T-cell (primary cell): ENCODE measurements at regions of chrX and their contacts with region 1.

Region 1: GRCh38 chrX:154443479-154443910 is 446 bp upstream of the FAM50A start:
- DNase-seq: peak in 1 of 35 experiments; percentile 16
- ATAC-seq: peak in 3 of 4 experiments; percentile 5 to 28 (median 11)
- H3K4me3 ChIP-seq: peak overlapping the region in 1 of 2 donors; percentile 33
- H3K4me3 Mint-ChIP-seq: peak overlapping the region; percentile 60 to 72 (median 68)
- H3K27ac ChIP-seq: peak overlapping the region; percentile 70
- H3K27ac Mint-ChIP-seq: peak overlapping the region; percentile 41 to 77
- H3K4me1 ChIP-seq: peaks cover 0 to 52% of the 10 kb centered on the region in 2 experiments
- H3K4me1 Mint-ChIP-seq: peaks cover 15 to 42% (median 26%) of the 10 kb centered on the region in 3 donors
- H3K27me3 ChIP-seq: no peaks in the 10 kb centered on the region
- H3K27me3 Mint-ChIP-seq: no peaks in the 10 kb centered on the region

Region 2: DNA sequence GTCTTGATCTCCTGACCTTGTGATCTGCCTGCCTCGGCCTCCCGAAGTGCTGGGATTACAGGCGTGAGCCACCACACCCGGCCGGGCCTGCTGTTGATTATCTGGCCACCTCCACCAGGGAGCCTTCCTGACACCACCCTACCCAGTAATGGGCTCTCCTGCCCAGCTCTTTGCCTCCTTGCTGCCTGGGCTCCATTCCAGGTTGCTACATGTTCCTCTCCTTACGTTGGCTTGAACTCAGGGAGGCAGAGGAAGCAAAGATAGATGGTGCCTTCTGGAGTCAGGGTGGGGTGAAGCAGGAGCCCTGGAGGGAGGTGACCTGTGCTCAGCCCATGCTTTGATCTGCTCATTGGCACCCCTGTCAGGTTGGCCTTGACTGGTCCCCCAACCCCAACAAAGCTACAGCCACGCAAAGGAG is 95.4 kb before region 1 on chrX:
- CTCF ChIA-PET with region 1: no interaction called
- POLR2A ChIA-PET with region 1: no interaction called
- DNase-seq: peak in 1 of 35 experiments; percentile 25
- ATAC-seq: no peak
- H3K4me3 ChIP-seq: no peak overlapping the region
- H3K4me3 Mint-ChIP-seq: peak overlapping the region in 1 of 3 donors; percentile 29
- H3K27ac ChIP-seq: peak overlapping the region; percentile 58
- H3K27ac Mint-ChIP-seq: peak overlapping the region; percentile 63 to 69
- H3K4me1 ChIP-seq: peaks cover 4 to 61% of the 10 kb centered on the region in 2 experiments
- H3K4me1 Mint-ChIP-seq: peaks cover 34 to 55% (median 41%) of the 10 kb centered on the region in 3 donors
- H3K27me3 ChIP-seq: no peaks in the 10 kb centered on the region
- H3K27me3 Mint-ChIP-seq: no peaks in the 10 kb centered on the region

Region 3: GRCh38 chrX:154419732-154420364 is 23.6 kb before region 1 on chrX:
- CTCF ChIA-PET with region 1: no interaction called
- POLR2A ChIA-PET with region 1: interaction called in 1 of 2 experiments, 12 read pairs
- DNase-seq: no peak
- ATAC-seq: no peak
- H3K4me3 ChIP-seq: no peak overlapping the region
- H3K4me3 Mint-ChIP-seq: no peak overlapping the region
- H3K27ac ChIP-seq: no peak overlapping the region
- H3K27ac Mint-ChIP-seq: no peak overlapping the region
- H3K4me1 ChIP-seq: no peaks in the 10 kb centered on the region
- H3K4me1 Mint-ChIP-seq: peaks cover 0 to 2% (median 0%) of the 10 kb centered on the region in 3 donors
- H3K27me3 ChIP-seq: no peaks in the 10 kb centered on the region
- H3K27me3 Mint-ChIP-seq: no peaks in the 10 kb centered on the region

Region 4: GRCh38 chrX:154431341-154431740 is 12.2 kb before region 1 on chrX:
- CTCF ChIA-PET with region 1: no interaction called
- POLR2A ChIA-PET with region 1: no interaction called
- DNase-seq: no peak
- ATAC-seq: no peak
- H3K4me3 ChIP-seq: no peak overlapping the region
- H3K4me3 Mint-ChIP-seq: no peak overlapping the region
- H3K27ac ChIP-seq: no peak overlapping the region
- H3K27ac Mint-ChIP-seq: peak overlapping the region; percentile 5 to 31
- H3K4me1 ChIP-seq: peaks cover 0 to 34% of the 10 kb centered on the region in 2 experiments
- H3K4me1 Mint-ChIP-seq: peaks cover 21 to 34% (median 34%) of the 10 kb centered on the region in 3 donors
- H3K27me3 ChIP-seq: no peaks in the 10 kb centered on the region
- H3K27me3 Mint-ChIP-seq: peaks cover 0 to 7% of the 10 kb centered on the region in 2 donors

Region 5: DNA sequence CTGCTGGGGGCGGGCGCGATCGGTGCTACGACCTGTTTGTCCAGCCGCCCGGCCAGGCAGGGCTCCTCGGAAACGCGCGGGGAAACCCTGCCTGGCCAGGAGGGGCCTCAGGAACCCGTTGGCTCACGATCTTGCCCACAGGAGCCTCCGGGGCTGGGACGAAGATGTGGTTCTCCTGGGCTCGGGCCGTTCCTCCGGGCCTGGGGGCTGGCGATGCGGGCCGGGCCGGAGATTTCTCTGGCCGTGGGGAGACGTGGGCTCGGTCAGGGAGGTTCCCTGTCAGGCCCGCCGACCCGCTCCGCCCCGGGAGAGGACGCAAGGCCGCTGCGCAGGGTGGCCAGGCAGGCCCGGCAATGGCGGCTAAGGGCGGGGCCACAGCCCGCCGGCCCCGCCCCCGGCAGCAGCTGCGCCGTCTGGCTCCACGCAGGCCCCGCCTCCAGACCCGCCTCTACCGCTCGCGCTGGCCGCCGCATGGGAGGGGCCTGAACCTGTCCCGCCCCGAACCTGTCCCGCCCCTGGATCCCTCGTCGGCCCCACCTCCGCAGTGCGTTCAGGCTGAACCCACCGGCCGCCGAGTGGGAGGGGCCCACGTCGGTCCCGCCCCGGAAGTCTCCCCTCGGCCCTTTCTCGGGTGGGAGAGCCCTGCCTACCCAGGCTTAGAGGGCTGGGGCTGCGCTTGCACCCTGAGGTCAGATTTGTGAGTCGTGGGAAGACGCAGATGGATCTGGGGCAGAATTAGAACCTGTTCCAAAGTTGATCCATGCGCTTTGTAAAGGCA is 72.6 kb after region 1 on chrX and contains the start of gene FAM3A:
- CTCF ChIA-PET with region 1: no interaction called
- POLR2A ChIA-PET with region 1: no interaction called
- DNase-seq: peak; percentile 81 to 94 (median 89)
- ATAC-seq: peak; percentile 94 to 99 (median 94)
- H3K4me3 ChIP-seq: peak within 1 kb of the TSS; percentile 58 to 82
- H3K4me3 Mint-ChIP-seq: peak within 1 kb of the TSS; percentile 77 to 84 (median 82)
- H3K27ac ChIP-seq: peak within 1 kb of the TSS; percentile 68
- H3K27ac Mint-ChIP-seq: peak within 1 kb of the TSS; percentile 91 to 92
- H3K4me1 ChIP-seq: peaks cover 0 to 42% of the 10 kb centered on the region in 2 experiments
- H3K4me1 Mint-ChIP-seq: peaks cover 28 to 31% (median 30%) of the 10 kb centered on the region in 3 donors
- H3K27me3 ChIP-seq: no peaks in the 10 kb centered on the region
- H3K27me3 Mint-ChIP-seq: peaks cover 0 to 9% of the 10 kb centered on the region in 2 donors
- total RNA-seq, gene FAM3A: 33.9 to 67.6 (median 57.8) TPM

Region 6: DNA sequence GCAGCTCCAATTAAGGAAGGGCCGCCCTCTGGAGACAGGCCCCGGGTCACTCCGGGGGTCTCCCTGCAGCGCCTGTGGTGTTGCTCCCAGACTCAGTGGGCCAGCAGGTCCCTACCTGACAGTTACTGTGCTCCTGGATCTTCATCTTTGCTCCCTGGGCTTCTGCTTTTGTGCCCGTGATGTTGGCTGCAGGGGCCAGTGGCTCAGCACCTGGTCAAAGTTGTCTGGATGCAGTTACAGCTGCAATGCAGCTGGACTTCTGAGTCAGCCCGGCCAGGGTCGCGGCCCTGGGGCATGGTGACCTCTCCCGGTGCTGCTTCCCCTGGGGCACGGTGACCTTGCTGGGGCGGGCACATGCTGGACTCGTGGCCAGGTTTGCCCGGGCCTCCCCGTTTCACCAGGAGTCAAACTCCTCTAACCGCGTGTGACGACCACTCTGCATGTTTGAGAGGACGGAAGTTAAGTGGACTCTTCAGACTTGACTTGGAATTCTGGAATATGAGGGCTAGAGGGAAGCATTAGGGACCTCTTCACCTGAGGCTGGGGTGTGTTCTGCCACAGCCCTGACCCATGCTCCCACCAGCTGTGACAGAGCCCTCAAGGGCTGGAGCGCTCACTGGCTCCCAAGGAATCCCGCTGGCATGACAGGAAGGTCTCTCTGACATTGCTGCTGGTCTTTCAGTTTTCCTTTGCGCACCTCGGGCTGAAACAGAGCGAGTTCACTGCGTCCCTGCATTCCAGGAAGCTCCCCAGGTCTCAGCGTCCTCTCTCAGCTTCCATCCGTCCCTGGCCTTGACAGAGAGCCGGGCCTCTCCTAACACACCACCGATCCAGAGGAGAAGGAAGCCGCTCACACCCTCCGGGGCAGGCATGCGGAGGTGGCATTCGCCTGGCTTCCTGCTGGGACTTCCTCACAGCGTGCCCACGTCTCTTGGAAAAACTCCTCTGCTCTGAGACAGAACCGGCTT is 206.3 kb after region 1 on chrX:
- CTCF ChIA-PET with region 1: no interaction called
- POLR2A ChIA-PET with region 1: no interaction called
- DNase-seq: no peak
- ATAC-seq: no peak
- H3K4me3 ChIP-seq: no peak overlapping the region
- H3K4me3 Mint-ChIP-seq: no peak overlapping the region
- H3K27ac ChIP-seq: no peak overlapping the region
- H3K27ac Mint-ChIP-seq: no peak overlapping the region
- H3K4me1 ChIP-seq: no peaks in the 10 kb centered on the region
- H3K4me1 Mint-ChIP-seq: no peaks in the 10 kb centered on the region
- H3K27me3 ChIP-seq: no peaks in the 10 kb centered on the region
- H3K27me3 Mint-ChIP-seq: peaks cover 0 to under 1% of the 10 kb centered on the region in 2 donors